Activated CD4-positive, alpha-beta T cell treated with anti-CD3 and anti-CD28 coated beads for 36 hours (primary cell): ENCODE measurements at regions of chr6 and their contacts with region 1.

Region 1: GRCh38 chr6:32838114-32838958 is at the start of gene TAP2:
- DNase-seq: peak; percentile 99
- ATAC-seq: peak; percentile 82
- H3K4me3 Mint-ChIP-seq: peak within 1 kb of the TSS; percentile 95
- H3K27ac Mint-ChIP-seq: peak within 1 kb of the TSS; percentile 94
- H3K4me1 Mint-ChIP-seq: peaks cover 79% of the 10 kb centered on the region
- H3K27me3 Mint-ChIP-seq: no peaks in the 10 kb centered on the region
- total RNA-seq, gene TAP2: 96.4 to 150 TPM

Region 2: DNA sequence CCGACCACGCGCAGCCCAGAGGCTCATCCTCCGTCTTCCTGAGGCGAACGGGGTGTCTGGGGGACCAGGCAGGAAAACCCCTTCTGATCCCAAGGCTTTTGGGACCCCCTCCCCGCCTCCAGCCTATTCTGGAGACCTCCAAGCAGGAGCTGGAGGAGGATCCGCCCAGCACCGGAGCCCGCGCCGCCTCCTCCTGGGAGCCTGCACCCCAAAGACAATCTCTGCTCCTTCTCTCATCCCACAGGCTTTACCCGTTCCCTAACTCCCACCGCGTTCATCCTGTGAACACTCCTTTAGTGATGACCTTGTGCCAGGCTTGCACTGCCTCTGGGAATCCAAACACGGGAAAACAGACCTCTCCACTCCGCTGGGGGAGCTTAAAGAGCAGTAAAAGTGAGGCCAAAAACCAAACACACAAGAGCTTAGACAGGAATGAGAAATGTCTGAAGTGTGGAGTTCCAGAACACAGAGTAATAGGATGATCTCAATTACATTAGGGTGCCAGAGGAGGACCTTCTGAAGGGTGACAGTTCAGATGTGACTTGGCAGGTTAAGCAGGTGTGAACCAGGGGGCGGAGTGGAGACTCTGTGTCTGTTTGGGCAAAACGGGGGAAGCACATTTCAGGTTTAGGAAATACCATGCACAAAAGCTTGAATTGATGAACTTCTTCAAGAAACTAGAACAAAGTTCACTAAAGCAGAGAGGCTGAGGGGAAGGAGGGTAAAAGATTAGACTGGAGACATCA is 315.9 kb before region 1 on chr6:
- CTCF ChIA-PET with region 1: no interaction called
- POLR2A ChIA-PET with region 1: no interaction called
- intact Hi-C with region 1: no loop called
- DNase-seq: no peak
- ATAC-seq: no peak
- H3K4me3 Mint-ChIP-seq: no peak overlapping the region
- H3K27ac Mint-ChIP-seq: no peak overlapping the region
- H3K4me1 Mint-ChIP-seq: no peaks in the 10 kb centered on the region
- H3K27me3 Mint-ChIP-seq: no peaks in the 10 kb centered on the region

Region 3: GRCh38 chr6:32825966-32826365 is 12.4 kb before region 1 on chr6:
- CTCF ChIA-PET with region 1: interaction called, 19 read pairs
- POLR2A ChIA-PET with region 1: interaction called, 3 read pairs
- intact Hi-C with region 1: no loop called
- DNase-seq: no peak
- ATAC-seq: no peak
- H3K4me3 Mint-ChIP-seq: no peak overlapping the region
- H3K27ac Mint-ChIP-seq: no peak overlapping the region
- H3K4me1 Mint-ChIP-seq: peaks cover 28% of the 10 kb centered on the region
- H3K27me3 Mint-ChIP-seq: no peaks in the 10 kb centered on the region

Region 4: GRCh38 chr6:32853541-32854375 is 15.4 kb after region 1 on chr6 and contains the starts of genes PSMB9 and TAP1:
- CTCF ChIA-PET with region 1: interaction called, 240 read pairs
- POLR2A ChIA-PET with region 1: interaction called, 57 read pairs
- intact Hi-C with region 1: loop called (anchors 1 kb)
- DNase-seq: peak; percentile 98
- ATAC-seq: peak; percentile 84
- H3K4me3 Mint-ChIP-seq: peak within 1 kb of the TSS; percentile 100
- H3K27ac Mint-ChIP-seq: peak within 1 kb of the TSS; percentile 99
- H3K4me1 Mint-ChIP-seq: peaks cover 62% of the 10 kb centered on the region
- H3K27me3 Mint-ChIP-seq: no peaks in the 10 kb centered on the region
- total RNA-seq, gene PSMB9: 210 to 282 TPM
- total RNA-seq, gene TAP1: 191 to 255 TPM

Region 5: GRCh38 chr6:32879691-32880090 is 41.4 kb after region 1 on chr6:
- CTCF ChIA-PET with region 1: interaction called, 13 read pairs
- POLR2A ChIA-PET with region 1: no interaction called
- intact Hi-C with region 1: no loop called
- DNase-seq: no peak
- ATAC-seq: no peak
- H3K4me3 Mint-ChIP-seq: no peak overlapping the region
- H3K27ac Mint-ChIP-seq: no peak overlapping the region
- H3K4me1 Mint-ChIP-seq: peaks cover 15% of the 10 kb centered on the region
- H3K27me3 Mint-ChIP-seq: peaks cover 5% of the 10 kb centered on the region

Region 6: GRCh38 chr6:32885698-32886286 is 47.5 kb after region 1 on chr6:
- CTCF ChIA-PET with region 1: interaction called, 13 read pairs
- POLR2A ChIA-PET with region 1: no interaction called
- intact Hi-C with region 1: no loop called
- DNase-seq: no peak
- ATAC-seq: peak; percentile 55
- H3K4me3 Mint-ChIP-seq: no peak overlapping the region
- H3K27ac Mint-ChIP-seq: no peak overlapping the region
- H3K4me1 Mint-ChIP-seq: peaks cover 10% of the 10 kb centered on the region
- H3K27me3 Mint-ChIP-seq: no peaks in the 10 kb centered on the region

Region 7: DNA sequence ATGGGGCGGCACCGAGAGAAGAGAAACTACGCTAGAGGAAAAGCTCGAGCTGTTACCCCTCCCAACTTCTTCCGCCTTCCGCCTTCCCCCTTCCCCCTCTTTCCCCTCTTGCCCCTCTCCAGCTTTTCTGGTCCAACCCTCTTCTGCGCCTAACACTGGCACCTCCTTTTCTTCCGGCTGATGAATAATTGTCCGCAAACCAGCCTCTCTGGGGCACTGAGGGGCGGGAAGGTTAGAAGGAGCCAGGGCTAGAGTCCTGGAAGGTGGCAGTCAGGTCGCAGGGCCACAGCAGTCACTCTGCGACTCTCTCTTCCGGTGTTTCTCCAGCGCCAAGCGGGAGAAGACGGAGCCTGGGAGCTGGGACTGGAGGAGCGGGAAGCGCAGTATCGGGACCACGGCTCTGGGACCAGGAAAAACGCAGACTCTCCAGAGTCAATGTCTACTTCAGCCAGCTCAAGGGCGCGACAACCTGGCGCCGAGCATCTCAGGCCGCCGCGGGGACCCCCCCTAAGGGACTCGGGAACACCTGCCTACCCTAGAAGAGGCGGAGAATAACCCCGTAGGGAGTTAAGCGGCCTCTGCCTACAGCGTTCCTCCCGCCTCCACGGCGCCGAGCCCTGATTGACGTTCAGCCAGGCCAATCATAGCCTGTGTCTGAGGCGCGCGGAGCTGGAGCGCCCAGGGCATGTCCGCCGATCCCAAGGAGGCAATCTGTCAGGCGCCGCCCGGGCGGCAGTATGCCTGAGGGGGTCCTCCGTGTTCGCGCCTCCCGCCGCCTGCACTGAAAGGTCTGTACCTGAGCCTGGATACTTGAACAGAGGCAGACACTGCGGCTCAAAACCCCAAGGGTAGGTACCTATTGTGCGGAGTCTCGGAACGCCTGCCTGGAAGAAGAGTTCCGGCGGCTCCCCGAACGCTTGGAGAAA is 56.0 kb after region 1 on chr6:
- CTCF ChIA-PET with region 1: interaction called, 11 read pairs
- POLR2A ChIA-PET with region 1: no interaction called
- intact Hi-C with region 1: loop called in 1 of 2 experiments (anchors 2 kb)
- DNase-seq: peak; percentile 96
- ATAC-seq: peak; percentile 99
- H3K4me3 Mint-ChIP-seq: peak overlapping the region; percentile 93
- H3K27ac Mint-ChIP-seq: peak overlapping the region; percentile 94
- H3K4me1 Mint-ChIP-seq: peaks cover 25% of the 10 kb centered on the region
- H3K27me3 Mint-ChIP-seq: no peaks in the 10 kb centered on the region